Adrenal gland (tissue), 19 donors: ENCODE measurements at regions of chr7 and their contacts with region 1.

Region 1: GRCh38 chr7:129210256-129210988 is 14.4 kb upstream of the AHCYL2 start:
- DNase-seq: peak; percentile 69 to 89 (median 80)
- H3K4me3 ChIP-seq: no peak overlapping the region
- H3K27ac ChIP-seq: no peak overlapping the region
- H3K4me1 ChIP-seq: no peaks in the 10 kb centered on the region
- H3K27me3 ChIP-seq: no peaks in the 10 kb centered on the region
- CTCF ChIP-seq: peak; percentile 74 to 87 (median 84)
- POLR2A ChIP-seq: no peak

Region 2: DNA sequence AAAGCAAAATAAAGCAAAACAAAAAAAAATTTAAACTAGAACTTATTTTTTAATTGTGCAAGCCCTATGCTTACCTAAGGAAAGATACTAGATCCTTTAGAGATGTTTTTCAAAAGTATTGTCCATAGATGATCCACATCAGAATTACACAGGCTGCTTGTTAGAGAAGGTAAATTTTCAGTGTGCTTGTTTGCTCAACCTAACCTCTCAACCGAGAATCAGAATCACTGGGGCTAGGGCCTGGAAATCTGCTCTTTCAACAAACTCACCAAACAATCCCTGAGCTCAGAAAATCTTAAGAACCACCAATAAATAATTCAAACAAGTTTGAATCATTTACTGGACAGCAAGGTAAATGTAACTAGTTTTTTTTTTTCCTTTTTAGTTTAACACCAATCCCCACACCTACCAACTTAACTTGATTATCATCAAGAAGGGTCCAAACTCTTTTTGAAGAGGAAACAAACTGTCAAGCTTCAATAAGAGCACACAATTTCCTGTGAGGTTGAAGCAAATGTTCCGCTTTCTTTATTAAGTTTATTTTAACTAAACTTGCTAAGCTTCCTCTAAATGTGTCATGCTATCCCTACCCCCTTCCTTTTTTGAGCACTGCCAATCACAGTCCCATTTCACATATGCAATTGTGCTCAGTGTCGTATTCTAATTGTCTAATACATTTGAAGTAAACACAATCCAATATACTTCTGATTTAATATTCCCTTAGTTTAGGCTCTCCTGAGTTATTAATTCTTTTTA is 73.4 kb before region 1 on chr7:
- intact Hi-C with region 1: no loop called
- DNase-seq: no peak
- H3K4me3 ChIP-seq: no peak overlapping the region
- H3K27ac ChIP-seq: peak overlapping the region in 1 of 5 donors; percentile 1
- H3K4me1 ChIP-seq: no peaks in the 10 kb centered on the region
- H3K27me3 ChIP-seq: no peaks in the 10 kb centered on the region
- CTCF ChIP-seq: no peak
- POLR2A ChIP-seq: no peak

Region 3: GRCh38 chr7:129163875-129164544 is 46.4 kb before region 1 on chr7:
- intact Hi-C with region 1: loop called (anchors 2 to 5 kb)
- DNase-seq: peak in 1 of 7 donors; percentile 31
- H3K4me3 ChIP-seq: no peak overlapping the region
- H3K27ac ChIP-seq: no peak overlapping the region
- H3K4me1 ChIP-seq: no peaks in the 10 kb centered on the region
- H3K27me3 ChIP-seq: no peaks in the 10 kb centered on the region
- CTCF ChIP-seq: peak; percentile 70 to 90 (median 77)
- POLR2A ChIP-seq: no peak